Cardiac septum (tissue), 1 donor: ENCODE measurements at regions of chr5 and their contacts with region 1.

Region 1: DNA sequence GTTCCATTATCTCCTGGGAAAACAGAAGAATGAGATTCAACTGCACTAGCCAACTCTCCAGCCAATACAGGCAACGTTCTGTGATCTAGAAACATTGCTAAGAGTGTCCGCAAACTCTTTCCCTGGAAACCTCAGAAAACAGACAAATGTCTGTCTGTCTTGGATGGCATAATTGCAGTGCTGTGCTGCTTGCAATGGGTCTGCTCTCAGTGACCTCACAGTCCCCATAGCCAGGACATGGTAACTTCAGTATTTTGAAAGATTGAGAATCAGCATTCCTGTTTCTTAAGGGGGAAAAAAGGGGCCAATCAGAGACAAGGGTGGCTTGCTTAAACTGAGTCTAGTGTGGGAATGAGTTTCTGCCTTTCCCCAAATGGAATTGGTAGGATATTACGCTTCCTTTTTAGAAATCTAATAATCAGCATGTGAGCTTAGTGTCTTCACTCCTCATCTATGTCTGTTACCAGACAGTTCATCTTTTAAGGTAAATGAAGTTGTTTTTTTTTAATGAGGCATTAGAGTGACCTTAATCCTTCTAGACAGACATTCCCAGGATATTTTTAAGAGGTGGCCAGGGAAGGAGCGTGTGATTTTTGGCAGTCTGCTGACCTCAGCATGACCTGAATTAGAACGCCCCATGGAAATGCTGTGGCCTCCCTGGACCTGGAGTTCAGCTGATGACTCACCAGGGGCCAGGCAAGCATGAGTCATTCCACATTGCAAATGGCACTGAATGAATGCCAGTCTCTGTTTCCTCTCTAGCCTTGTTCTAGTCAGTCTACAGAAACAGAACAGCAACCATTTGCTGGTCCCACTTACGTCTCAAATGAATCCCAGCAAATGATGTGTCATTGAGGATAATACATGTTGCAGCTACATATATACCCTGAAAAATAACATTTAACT is 210.2 kb upstream of the ACTBL2 start:
- DNase-seq: peak; percentile 80

Region 2: DNA sequence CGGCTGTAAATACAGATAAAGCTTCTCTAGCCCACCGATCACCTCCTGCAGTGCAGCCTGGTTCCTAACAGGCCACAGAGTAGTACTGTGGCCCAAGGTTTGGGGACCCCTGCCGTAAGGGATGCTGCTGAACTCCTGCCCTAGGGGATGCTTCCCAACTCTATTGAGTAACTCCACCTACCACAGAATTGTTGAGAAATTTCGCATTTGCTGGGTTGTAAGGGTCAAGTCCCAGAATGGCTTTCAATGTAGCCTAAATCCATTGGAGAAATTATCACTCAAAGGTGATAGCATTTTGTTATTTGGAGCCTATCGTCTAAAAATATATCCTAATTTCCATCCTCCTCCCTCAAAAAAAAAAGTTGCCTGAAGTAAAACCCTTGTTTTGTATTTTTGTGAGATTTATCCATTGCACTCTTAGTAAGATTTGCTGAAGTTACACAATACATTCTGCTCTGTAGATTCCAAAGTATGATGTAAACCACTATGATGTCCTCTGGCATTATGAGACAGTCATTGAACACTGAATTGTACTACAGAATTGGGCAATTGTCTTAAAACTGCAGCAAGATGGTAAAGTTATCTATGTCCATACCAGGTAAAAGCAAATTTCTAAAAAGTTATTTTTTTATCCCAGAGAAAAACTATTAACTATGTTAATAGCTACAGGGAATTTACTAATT is 224.2 kb before region 1 on chr5:
- intact Hi-C with region 1: no loop called
- DNase-seq: no peak

Region 3: GRCh38 chr5:57586649-57587048 is 106.2 kb before region 1 on chr5:
- intact Hi-C with region 1: no loop called
- DNase-seq: no peak

Region 4: GRCh38 chr5:57662991-57663390 is 29.8 kb before region 1 on chr5:
- intact Hi-C with region 1: loop called (anchors 1 kb)
- DNase-seq: no peak